Ovary (tissue), 10 donors: ENCODE measurements at regions of chr6 and their contacts with region 1.

Region 1: DNA sequence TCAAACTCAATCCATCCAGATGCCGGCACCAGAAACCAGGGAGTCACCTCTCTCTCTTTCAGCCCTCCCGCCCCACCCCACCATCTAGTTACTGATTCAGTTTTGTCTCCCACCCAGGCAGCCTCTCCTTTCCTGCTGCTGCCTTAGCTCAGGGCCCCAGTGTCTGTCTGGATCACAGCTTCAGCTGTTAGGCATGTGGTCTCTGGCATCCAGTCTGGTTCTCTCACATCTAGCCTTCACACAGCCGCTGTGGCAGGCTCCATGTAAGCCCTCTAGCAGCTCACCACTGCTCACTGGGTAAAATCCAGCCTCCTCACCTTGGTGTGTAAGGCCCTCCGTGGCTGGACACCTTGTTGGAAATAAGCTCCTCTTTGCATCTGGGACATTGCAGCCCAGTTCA is 21.3 kb downstream of the AARS2 start:
- DNase-seq: no peak
- H3K4me3 ChIP-seq: no peak overlapping the region
- H3K27ac ChIP-seq: no peak overlapping the region
- H3K4me1 ChIP-seq: no peaks in the 10 kb centered on the region
- H3K27me3 ChIP-seq: no peaks in the 10 kb centered on the region
- CTCF ChIP-seq: no peak
- EP300 ChIP-seq: no peak
- POLR2A ChIP-seq: no peak

Region 2: DNA sequence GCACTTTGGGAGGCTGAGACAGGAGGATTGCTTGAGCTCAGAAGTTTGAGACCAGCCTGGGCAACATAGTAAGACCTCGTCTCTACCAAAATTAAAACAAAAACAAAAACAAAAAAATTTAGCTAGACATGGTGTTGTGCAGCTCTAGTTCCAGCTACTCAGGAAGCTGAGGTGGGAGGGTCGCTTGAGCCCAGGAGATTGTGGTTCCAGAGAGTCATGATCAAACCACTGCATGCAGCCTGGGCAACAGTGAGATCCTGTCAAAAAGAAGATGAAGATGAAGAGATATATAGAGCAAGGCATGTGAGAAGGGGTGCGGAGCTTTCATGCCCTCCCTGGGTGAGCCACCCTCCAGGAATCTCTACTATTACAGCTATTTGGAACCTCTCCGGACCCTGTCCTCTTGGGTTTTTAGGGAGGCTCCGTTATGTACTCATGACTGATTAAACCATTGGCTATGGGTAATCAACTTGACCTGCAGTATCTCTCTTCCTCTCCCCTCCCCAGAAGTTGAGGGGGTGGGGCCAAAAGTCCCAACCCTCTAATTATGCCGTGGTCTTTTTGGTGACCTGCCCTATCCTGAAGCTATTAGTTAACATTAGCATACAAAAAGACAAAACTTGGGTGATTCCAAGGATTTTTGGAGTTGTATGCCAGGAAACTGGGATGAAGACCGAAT is 706.8 kb before region 1 on chr6:
- intact Hi-C with region 1: no loop called
- DNase-seq: no peak
- H3K4me3 ChIP-seq: no peak overlapping the region
- H3K27ac ChIP-seq: no peak overlapping the region
- H3K4me1 ChIP-seq: no peaks in the 10 kb centered on the region
- H3K27me3 ChIP-seq: no peaks in the 10 kb centered on the region
- CTCF ChIP-seq: no peak
- EP300 ChIP-seq: no peak
- POLR2A ChIP-seq: no peak

Region 3: GRCh38 chr6:43990627-43991619 is 300.9 kb before region 1 on chr6:
- intact Hi-C with region 1: no loop called
- DNase-seq: peak; percentile 35 to 88 (median 69)
- H3K4me3 ChIP-seq: no peak overlapping the region
- H3K27ac ChIP-seq: no peak overlapping the region
- H3K4me1 ChIP-seq: peaks cover 12% of the 10 kb centered on the region
- H3K27me3 ChIP-seq: no peaks in the 10 kb centered on the region
- CTCF ChIP-seq: no peak
- EP300 ChIP-seq: no peak
- POLR2A ChIP-seq: no peak

Region 4: GRCh38 chr6:44133003-44133931 is 158.6 kb before region 1 on chr6:
- intact Hi-C with region 1: loop called in 1 of 4 experiments (anchors 1 kb)
- DNase-seq: peak in 3 of 5 donors; percentile 21 to 52 (median 52)
- H3K4me3 ChIP-seq: no peak overlapping the region
- H3K27ac ChIP-seq: no peak overlapping the region
- H3K4me1 ChIP-seq: peaks cover 4% of the 10 kb centered on the region
- H3K27me3 ChIP-seq: no peaks in the 10 kb centered on the region
- CTCF ChIP-seq: no peak
- EP300 ChIP-seq: no peak
- POLR2A ChIP-seq: no peak

Region 5: DNA sequence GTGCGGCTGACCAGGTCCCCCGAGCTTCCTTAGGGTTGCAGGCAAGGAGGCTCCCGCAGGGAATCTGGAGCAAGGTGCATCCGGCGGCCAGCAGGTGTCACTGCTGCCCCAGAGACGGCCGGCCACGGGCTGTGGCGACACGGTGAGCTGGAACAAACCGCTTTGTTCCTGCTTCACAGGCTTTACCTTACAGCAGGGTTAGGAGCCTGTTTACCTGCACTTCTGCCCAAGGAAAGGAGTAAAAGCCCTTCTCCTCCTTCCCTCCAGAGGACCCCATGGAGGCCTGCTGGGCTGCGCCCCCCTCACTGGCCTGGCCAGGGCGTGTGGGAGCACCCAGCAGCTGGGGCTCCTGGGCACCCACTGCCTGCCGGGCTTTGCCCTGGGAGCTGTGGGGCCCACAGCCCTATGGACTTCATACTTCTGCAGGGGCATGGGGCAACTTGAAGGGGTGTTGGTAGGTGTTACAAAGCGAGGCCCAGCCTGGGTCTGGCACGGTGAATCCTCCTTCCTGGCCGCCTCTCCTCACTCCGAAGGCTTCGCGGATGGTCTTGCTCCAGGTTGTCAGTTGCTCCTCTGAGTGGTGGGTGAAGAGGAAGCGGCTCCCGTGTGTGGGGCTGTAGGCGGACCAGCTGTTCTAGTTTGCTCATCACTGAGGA is 184.1 kb after region 1 on chr6:
- intact Hi-C with region 1: no loop called
- DNase-seq: peak; percentile 73 to 88 (median 81)
- H3K4me3 ChIP-seq: no peak overlapping the region
- H3K27ac ChIP-seq: no peak overlapping the region
- H3K4me1 ChIP-seq: peaks cover 9% of the 10 kb centered on the region
- H3K27me3 ChIP-seq: no peaks in the 10 kb centered on the region
- CTCF ChIP-seq: peak; percentile 86 to 92 (median 86)
- EP300 ChIP-seq: no peak
- POLR2A ChIP-seq: no peak